AG04449 (cell line): ENCODE measurements at regions of chr11 and their contacts with region 1.

Region 1: DNA sequence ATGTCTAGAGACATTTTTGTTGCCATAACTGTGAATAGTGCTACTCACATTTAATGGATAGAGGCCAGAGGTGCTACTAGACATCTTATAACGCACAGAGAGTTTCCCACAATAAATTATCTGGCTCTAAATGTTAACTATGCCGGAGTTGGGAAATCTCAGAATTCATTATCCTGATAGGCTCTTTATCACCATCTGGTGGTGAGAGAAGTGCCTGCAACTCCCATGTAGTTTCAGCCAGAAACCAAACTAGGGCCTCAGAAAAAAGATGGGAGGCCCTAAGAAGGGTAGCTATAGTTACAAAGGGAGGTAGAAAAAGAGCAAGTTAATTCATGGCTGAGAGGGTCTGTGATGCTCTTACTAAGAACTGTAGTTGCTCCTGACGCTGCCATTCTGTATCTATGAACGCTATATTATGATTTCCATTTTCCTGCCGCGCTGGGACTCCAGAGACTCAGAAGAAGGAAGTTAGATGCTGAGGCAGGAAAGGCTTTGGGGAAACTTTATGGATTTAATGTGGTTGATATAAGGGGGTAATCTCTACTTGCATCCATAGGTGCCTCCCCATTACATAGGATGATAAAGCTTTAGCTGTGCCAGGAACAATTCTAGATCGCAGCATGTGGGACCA is 22.9 kb upstream of the MRPL17 start:
- DNase-seq: no peak
- H3K4me3 ChIP-seq: no peak overlapping the region
- CTCF ChIP-seq: peak; percentile 75

Region 2: DNA sequence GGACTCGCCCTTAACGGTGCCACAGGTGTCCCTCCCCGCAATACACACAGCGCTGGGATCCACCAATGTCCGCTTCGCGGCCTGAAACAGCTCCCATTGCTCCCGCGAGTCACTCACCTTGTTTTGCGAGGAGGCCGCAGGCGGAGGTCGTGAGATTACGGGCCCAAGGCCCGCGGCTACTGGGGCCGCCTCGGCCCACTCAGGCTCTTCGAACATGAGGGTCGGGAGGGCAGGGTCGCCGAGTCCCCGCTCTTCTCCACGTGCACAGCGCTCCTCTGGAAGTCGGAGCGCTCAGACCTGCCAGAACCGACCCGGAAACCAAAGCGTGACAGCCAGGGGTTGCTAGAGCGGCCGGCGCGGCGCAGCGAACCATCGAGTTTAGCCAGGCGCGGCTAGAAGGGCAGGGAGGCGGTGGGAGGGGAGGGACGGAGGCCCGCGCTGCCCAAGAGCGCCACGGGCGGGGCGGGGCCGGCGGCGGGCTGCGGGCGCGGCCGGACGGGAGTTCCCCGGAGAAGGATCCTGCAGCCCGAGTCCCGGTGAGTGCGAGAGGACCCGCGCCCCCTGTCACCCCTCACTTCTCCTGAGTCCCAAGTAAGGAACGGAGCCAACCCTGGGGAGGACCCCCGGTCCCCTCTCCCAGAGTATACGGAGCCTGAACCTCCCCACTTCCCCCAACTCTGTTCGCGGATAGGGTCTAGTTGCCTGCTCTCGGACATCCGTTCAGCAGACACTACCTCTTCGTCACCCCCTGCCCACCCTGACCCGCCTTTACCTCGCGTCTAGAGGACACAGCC is 102.5 kb before region 1 on chr11 and contains the starts of genes ILK and RRP8:
- CTCF ChIA-PET with region 1: interaction called, 10 read pairs
- POLR2A ChIA-PET with region 1: no interaction called
- DNase-seq: no peak
- H3K4me3 ChIP-seq: peak within 1 kb of the TSS; percentile 97
- CTCF ChIP-seq: no peak

Region 3: GRCh38 chr11:6682936-6683861 is 22.8 kb before region 1 on chr11 and contains the start of gene MRPL17:
- CTCF ChIA-PET with region 1: interaction called, 17 read pairs
- POLR2A ChIA-PET with region 1: no interaction called
- DNase-seq: peak; percentile 86
- H3K4me3 ChIP-seq: peak within 1 kb of the TSS; percentile 100
- CTCF ChIP-seq: peak; percentile 88

Region 4: GRCh38 chr11:6737872-6738466 is 31.9 kb after region 1 on chr11:
- CTCF ChIA-PET with region 1: interaction called, 22 read pairs
- POLR2A ChIA-PET with region 1: no interaction called
- DNase-seq: no peak
- H3K4me3 ChIP-seq: no peak overlapping the region
- CTCF ChIP-seq: peak; percentile 58